ENCODE measurements at regions of chr16 and their contacts with region 1.

Region 1: GRCh38 chr16:71894921-71895678 is at the start of gene IST1:
- DNase-seq: peak; percentile 99
- ATAC-seq: peak; percentile 95 to 98 (median 98)
- H3K4me3 ChIP-seq: peak within 1 kb of the TSS; percentile 69 to 99 (median 90)
- H3K27ac ChIP-seq: peak within 1 kb of the TSS; percentile 87 to 99 (median 98)
- H3K4me1 ChIP-seq: peaks cover 4 to 45% (median 34%) of the 10 kb centered on the region in 12 donors
- H3K27me3 ChIP-seq: no peaks in the 10 kb centered on the region
- CTCF ChIP-seq: peak in 1 of 12 donors; percentile 4
- POLR2A ChIP-seq: peak; percentile 29 to 93
- total RNA-seq, gene IST1: 89.2 to 146 (median 109) TPM

Region 2: DNA sequence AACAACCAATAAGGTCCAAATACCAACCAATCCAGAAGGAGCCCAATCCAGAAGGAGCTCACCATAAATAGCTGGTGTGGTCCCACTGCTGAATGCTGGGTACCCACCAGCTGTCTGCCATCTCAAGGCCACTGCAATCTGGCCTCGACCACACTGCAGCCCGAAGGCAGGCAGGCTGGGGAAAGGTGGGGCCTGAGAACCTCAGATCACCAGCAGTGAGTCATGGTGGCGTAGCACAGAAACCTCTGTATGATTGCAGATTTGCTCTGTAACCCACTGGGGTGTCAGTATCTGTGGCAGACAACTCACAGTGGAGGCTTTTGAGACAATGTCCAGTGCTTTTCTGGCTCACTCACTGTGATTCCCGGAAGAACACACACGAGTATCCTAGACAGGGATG is 591.2 kb before region 1 on chr16:
- intact Hi-C with region 1: no loop called
- DNase-seq: no peak
- ATAC-seq: no peak
- H3K4me3 ChIP-seq: no peak overlapping the region
- H3K27ac ChIP-seq: no peak overlapping the region
- H3K4me1 ChIP-seq: no peaks in the 10 kb centered on the region
- H3K27me3 ChIP-seq: peaks cover 0 to 16% (median 0%) of the 10 kb centered on the region in 9 donors
- CTCF ChIP-seq: no peak
- POLR2A ChIP-seq: no peak

Region 3: GRCh38 chr16:71808593-71809459 is 86.3 kb before region 1 on chr16 and contains the start of gene AP1G1:
- intact Hi-C with region 1: loop called in 6 of 10 experiments (anchors 1 to 10 kb)
- DNase-seq: peak; percentile 96 to 98 (median 96)
- ATAC-seq: peak; percentile 98 to 99 (median 99)
- H3K4me3 ChIP-seq: peak within 1 kb of the TSS; percentile 75 to 100 (median 88)
- H3K27ac ChIP-seq: peak within 1 kb of the TSS; percentile 91 to 100 (median 97)
- H3K4me1 ChIP-seq: peaks cover 4 to 36% (median 31%) of the 10 kb centered on the region in 12 donors
- H3K27me3 ChIP-seq: no peaks in the 10 kb centered on the region
- CTCF ChIP-seq: peak in 1 of 12 donors; percentile 19
- POLR2A ChIP-seq: peak in 1 of 2 donors; percentile 31
- total RNA-seq, gene AP1G1: 32.1 to 60.5 (median 37.1) TPM

Region 4: DNA sequence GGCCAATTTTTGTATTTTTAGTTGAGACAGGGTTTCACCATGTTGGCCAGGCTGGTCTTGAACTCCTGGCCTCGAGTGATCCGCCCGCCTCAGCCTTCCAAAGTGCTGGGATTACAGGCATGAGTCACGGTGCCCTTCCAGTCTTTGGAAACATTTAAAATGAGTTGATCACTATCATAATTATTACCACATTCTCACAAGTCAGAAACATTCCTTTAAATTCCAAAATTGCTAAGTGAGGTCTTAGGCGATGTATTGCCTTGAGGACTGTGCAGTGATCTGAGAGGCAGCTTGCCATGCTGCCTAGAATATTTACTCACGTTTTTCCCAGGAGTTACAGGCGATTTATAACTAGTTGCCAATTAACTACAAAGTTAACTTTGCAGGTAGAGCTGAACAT is 55.1 kb before region 1 on chr16:
- intact Hi-C with region 1: no loop called
- DNase-seq: no peak
- ATAC-seq: no peak
- H3K4me3 ChIP-seq: no peak overlapping the region
- H3K27ac ChIP-seq: no peak overlapping the region
- H3K4me1 ChIP-seq: peaks cover 0 to 3% (median 0%) of the 10 kb centered on the region in 12 donors
- H3K27me3 ChIP-seq: no peaks in the 10 kb centered on the region
- CTCF ChIP-seq: no peak
- POLR2A ChIP-seq: no peak

Region 5: DNA sequence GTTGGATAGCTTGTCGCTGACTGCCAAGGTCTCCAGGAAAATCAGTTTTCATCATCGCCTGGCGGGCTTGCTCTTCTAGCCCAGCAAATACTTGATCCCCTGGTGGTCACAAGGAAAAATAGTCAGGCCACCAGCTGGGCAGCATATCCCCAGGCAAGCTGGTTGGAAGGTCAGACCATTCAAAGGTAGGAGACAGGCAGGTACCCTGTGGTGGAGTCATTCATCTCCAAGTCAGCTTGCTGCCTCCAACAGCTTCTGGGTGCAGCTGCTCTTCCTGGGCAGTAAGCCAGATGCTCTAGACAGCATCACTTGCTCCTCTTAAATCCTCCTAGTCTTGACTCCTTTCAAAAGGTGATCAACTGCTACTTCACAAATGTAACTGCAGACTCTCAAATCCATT is 27.2 kb before region 1 on chr16:
- intact Hi-C with region 1: no loop called
- DNase-seq: no peak
- ATAC-seq: no peak
- H3K4me3 ChIP-seq: no peak overlapping the region
- H3K27ac ChIP-seq: no peak overlapping the region
- H3K4me1 ChIP-seq: no peaks in the 10 kb centered on the region
- H3K27me3 ChIP-seq: no peaks in the 10 kb centered on the region
- CTCF ChIP-seq: no peak
- POLR2A ChIP-seq: no peak

Region 6: GRCh38 chr16:72008424-72009216 is 113.5 kb after region 1 on chr16 and contains the start of gene DHODH:
- intact Hi-C with region 1: loop called in 1 of 10 experiments (anchors 1 kb)
- DNase-seq: peak; percentile 98 to 99 (median 99)
- ATAC-seq: peak; percentile 100
- H3K4me3 ChIP-seq: peak within 1 kb of the TSS; percentile 69 to 96 (median 86)
- H3K27ac ChIP-seq: peak within 1 kb of the TSS in 9 of 12 donors; percentile 30 to 79 (median 62)
- H3K4me1 ChIP-seq: peaks cover 0 to 14% (median 10%) of the 10 kb centered on the region in 12 donors
- H3K27me3 ChIP-seq: no peaks in the 10 kb centered on the region
- CTCF ChIP-seq: peak in 3 of 12 donors; percentile 33 to 44 (median 33)
- POLR2A ChIP-seq: peak in 1 of 2 donors; percentile 64
- total RNA-seq, gene DHODH: 5.2 to 9.8 (median 7.5) TPM

Measured in heart left ventricle (tissue), 16 donors.